RWPE1 (cell line): ENCODE measurements at regions of chr9 and their contacts with region 1.

Region 1: GRCh38 chr9:107425101-107426045 is 64.2 kb downstream of the KLF4 start:
- DNase-seq: peak; percentile 61
- H3K27ac ChIP-seq: peak overlapping the region; percentile 63
- CTCF ChIP-seq: peak; percentile 97

Region 2: DNA sequence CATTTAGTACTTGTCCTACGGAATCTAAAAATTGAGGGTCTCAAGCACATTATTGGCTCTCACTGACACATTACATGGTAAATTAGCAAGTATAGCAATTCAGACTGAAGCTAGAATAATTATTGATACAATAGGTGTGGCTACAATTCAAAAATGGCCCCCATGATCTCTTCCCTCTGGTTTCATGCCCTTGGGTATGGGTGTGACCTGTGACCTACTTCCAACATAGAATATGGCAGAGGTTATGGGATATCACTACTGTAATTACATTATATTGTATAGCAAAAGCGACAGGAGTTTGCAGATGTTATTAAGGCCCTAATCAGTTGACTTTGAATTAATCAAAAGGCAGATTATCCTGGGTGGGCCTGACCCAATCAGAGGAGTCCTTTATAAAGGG is 12.1 kb before region 1 on chr9:
- CTCF ChIA-PET with region 1: interaction called, 15 read pairs
- POLR2A ChIA-PET with region 1: no interaction called
- DNase-seq: no peak
- H3K27ac ChIP-seq: no peak overlapping the region
- CTCF ChIP-seq: no peak

Region 3: GRCh38 chr9:107435415-107436170 is 10.2 kb after region 1 on chr9:
- CTCF ChIA-PET with region 1: interaction called, 12 read pairs
- POLR2A ChIA-PET with region 1: no interaction called
- DNase-seq: no peak
- H3K27ac ChIP-seq: no peak overlapping the region
- CTCF ChIP-seq: no peak

Region 4: DNA sequence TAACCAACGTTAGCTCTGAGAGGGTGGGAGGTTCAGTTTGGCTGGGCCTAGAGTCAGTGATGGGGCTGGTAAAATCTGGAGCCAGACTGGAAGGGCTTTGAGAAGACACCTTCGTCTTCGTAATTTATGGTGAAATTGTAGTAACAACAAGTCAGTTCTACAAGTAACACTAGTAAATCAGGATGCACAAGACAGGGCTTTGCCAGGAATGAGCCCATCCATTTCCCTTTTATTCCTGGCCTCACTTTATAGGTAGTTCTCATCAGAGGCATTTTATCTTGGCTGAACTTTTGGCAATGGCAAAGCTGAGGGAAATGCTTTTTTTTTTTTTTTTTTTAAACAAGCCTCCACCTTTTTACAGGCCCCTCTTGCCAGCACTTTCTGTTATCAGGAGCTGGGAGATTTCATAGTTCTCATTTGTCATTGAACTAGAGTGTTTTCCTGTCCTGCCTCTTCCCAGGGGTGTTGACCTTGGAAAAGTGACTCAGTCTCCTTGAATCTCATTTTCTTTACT is 174.7 kb after region 1 on chr9:
- CTCF ChIA-PET with region 1: no interaction called
- POLR2A ChIA-PET with region 1: no interaction called
- DNase-seq: no peak
- H3K27ac ChIP-seq: no peak overlapping the region
- CTCF ChIP-seq: no peak